ENCODE measurements at regions of chr18 and their contacts with region 1.

Region 1: DNA sequence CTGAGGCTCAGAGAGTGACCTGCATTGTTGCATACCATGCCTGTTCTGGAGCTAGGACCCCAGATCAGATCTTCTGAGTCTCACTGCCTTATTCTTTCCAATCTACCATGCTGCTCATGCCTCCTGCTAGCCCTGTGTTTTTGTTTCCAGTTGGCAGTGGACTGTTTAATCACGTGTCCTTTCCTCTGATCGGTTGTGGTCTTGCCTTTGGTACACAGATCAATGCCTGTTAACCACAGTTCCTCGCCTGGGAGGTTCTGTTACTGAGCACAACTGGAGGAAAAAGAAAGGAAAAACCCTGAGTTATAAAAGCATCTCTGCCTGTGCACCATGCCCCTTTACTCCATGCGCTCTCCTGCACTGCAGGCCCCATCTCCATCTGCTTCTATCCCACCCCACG is 329.1 kb downstream of the SETBP1 start:
- DNase-seq: no peak
- H3K4me3 ChIP-seq: no peak overlapping the region
- H3K27ac ChIP-seq: no peak overlapping the region
- H3K4me1 ChIP-seq: peaks cover 0 to 14% (median 2%) of the 10 kb centered on the region in 4 donors
- H3K27me3 ChIP-seq: no peaks in the 10 kb centered on the region
- CTCF ChIP-seq: no peak
- EP300 ChIP-seq: no peak
- POLR2A ChIP-seq: no peak

Region 2: GRCh38 chr18:45059695-45060094 is 49.9 kb after region 1 on chr18:
- in situ Hi-C with region 1: no loop called
- intact Hi-C with region 1: loop called (anchors 2 kb)
- DNase-seq: no peak
- H3K4me3 ChIP-seq: no peak overlapping the region
- H3K27ac ChIP-seq: no peak overlapping the region
- H3K4me1 ChIP-seq: peaks cover 0 to 4% (median 0%) of the 10 kb centered on the region in 4 donors
- H3K27me3 ChIP-seq: no peaks in the 10 kb centered on the region
- CTCF ChIP-seq: no peak
- EP300 ChIP-seq: no peak
- POLR2A ChIP-seq: no peak

Region 3: DNA sequence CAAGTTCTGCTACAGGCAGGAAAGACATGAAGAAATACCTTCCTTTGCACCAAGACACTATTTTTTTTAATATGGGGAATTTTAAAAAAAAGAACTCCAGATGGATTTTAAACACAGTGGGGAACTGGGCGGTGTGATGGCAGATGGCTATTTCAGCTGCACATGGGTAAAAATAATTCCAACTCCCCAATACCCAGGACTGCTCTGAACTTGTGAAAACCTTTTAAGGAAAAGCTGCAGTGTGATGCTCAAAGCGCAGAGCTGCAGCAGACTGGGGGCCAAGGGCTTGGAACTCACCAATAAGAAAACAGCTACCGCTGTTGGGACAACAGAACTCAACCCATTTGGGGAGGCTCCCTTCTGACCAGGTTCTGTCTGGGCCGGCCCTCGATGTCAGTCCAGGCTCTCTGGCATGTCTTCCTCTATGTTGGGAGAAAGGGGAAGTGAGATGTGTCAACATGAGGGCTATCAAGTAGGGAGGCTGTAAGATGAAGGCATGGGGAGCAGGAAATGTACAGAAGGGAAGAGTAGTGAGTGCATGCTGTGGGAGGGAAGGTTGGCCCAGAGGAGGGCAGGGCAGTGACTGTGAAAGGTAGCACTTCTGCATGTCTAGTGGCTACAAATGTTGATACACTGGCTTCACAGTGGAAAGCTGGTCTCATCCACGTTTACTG is 541.5 kb after region 1 on chr18:
- in situ Hi-C with region 1: no loop called
- intact Hi-C with region 1: no loop called
- DNase-seq: no peak
- H3K4me3 ChIP-seq: no peak overlapping the region
- H3K27ac ChIP-seq: no peak overlapping the region
- H3K4me1 ChIP-seq: no peaks in the 10 kb centered on the region
- H3K27me3 ChIP-seq: no peaks in the 10 kb centered on the region
- CTCF ChIP-seq: no peak
- EP300 ChIP-seq: no peak
- POLR2A ChIP-seq: no peak

Measured in transverse colon (tissue), 4 donors.